GM12878 (cell line): ENCODE measurements at regions of chr3 and their contacts with region 1.

Region 1: GRCh38 chr3:42190701-42191462 is 75.1 kb downstream of the CCK start:
- DNase-seq: no peak
- ATAC-seq: peak; percentile 47
- H3K4me3 ChIP-seq: no peak overlapping the region
- H3K27ac ChIP-seq: peak overlapping the region; percentile 81; the same call in 1 of the 2 replicates
- H3K4me1 ChIP-seq: peaks cover 50% of the 10 kb centered on the region
- H3K27me3 ChIP-seq: no peaks in the 10 kb centered on the region
- CTCF ChIP-seq: peak; percentile 75 to 91 (median 79)
- EP300 ChIP-seq: no peak
- POLR2A ChIP-seq: peak; percentile 21; the same call in 1 of the 2 replicates
- RAD21 ChIP-seq: peak; percentile 79

Region 2: DNA sequence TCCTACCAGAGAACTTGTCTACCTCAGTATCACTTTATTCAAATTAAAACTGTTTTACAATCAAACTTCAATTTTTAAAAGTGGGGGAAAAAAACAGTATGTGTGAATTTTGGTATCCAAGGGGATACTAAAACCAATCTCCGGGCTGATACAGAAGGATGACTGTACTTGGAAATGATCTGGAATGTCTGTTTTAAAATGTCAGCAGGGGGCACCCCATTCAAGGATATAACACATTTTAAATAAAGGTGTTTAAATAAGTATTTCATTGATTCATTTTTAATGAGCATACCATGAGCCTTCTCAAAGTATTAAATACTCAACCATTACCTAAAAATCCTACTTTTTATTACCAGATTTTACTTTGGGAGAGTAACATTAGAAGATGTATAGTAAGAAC is 296.9 kb before region 1 on chr3:
- CTCF ChIA-PET with region 1: interaction called, 19 read pairs
- POLR2A ChIA-PET with region 1: no interaction called
- RAD21 ChIA-PET with region 1: interaction called, 5 read pairs
- SMC1A ChIA-PET with region 1: interaction called, 13 read pairs
- in situ Hi-C with region 1: no loop called
- intact Hi-C with region 1: loop called (anchors 10 kb)
- DNase-seq: no peak
- ATAC-seq: no peak
- H3K4me3 ChIP-seq: no peak overlapping the region
- H3K27ac ChIP-seq: no peak overlapping the region
- H3K4me1 ChIP-seq: no peaks in the 10 kb centered on the region
- H3K27me3 ChIP-seq: no peaks in the 10 kb centered on the region
- CTCF ChIP-seq: peak; percentile 18 to 49 (median 34); a peak in 3 of 6 replicates
- EP300 ChIP-seq: no peak
- POLR2A ChIP-seq: no peak
- RAD21 ChIP-seq: peak; percentile 70

Region 3: DNA sequence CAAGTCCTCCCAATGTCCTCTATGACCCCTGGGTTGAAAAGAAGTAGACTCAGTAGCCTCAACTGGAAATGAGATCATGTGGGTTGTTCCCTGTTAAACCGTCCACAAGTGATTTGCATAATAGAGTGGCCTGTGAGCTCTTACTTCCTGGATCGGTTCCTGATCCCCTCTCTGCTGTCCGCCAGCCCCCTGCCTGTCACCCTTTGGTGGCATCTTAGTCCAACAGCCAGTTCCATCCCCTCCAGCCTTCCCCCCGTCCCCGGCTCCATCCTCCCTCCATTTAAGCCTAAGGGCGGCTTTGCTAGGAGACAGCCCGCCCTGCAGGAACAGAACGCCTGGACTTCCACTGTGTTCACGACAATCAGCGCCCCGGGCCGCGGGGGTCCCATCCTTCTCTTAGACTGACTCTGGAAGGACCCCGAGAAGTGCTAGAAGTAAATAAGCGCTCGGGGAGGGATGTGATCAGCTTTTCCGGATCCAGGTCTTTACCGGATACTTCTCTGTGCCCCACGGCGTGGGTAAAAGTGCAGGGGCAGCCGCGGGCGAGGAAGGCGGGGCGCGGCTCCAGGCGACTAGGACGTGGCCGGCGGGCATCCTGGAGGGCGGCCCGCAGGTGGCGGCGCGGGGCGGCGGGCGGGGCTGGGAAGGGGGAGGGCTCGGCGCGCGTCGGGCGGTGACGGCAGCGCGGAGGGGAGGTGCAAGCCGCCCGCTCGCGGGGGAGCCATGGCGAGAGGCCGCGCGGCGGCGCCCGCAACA is 177.8 kb before region 1 on chr3:
- CTCF ChIA-PET with region 1: interaction called, 9 read pairs
- POLR2A ChIA-PET with region 1: interaction called, 3 read pairs
- RAD21 ChIA-PET with region 1: interaction called, 5 read pairs
- SMC1A ChIA-PET with region 1: interaction called, 3 read pairs
- in situ Hi-C with region 1: no loop called
- intact Hi-C with region 1: loop called (anchors 5 kb)
- DNase-seq: peak; percentile 86
- ATAC-seq: peak; percentile 83
- H3K4me3 ChIP-seq: peak overlapping the region; percentile 99
- H3K27ac ChIP-seq: peak overlapping the region; percentile 93
- H3K4me1 ChIP-seq: peaks cover 16% of the 10 kb centered on the region
- H3K27me3 ChIP-seq: no peaks in the 10 kb centered on the region
- CTCF ChIP-seq: peak in 2 of 3 experiments; percentile 2 to 15; a peak in 1 of 6 replicates
- EP300 ChIP-seq: peak; percentile 69 to 78; a peak in 2 of 4 replicates
- POLR2A ChIP-seq: peak; percentile 88
- RAD21 ChIP-seq: no peak

Region 4: GRCh38 chr3:42118762-42119361 is 72.0 kb before region 1 on chr3:
- CTCF ChIA-PET with region 1: interaction called, 159 read pairs
- POLR2A ChIA-PET with region 1: interaction called, 5 read pairs
- RAD21 ChIA-PET with region 1: interaction called, 64 read pairs
- SMC1A ChIA-PET with region 1: interaction called, 105 read pairs
- in situ Hi-C with region 1: no loop called
- intact Hi-C with region 1: loop called (anchors 1 kb)
- DNase-seq: peak; percentile 71
- ATAC-seq: peak; percentile 89
- H3K4me3 ChIP-seq: no peak overlapping the region
- H3K27ac ChIP-seq: peak overlapping the region; percentile 71
- H3K4me1 ChIP-seq: peaks cover 48% of the 10 kb centered on the region
- H3K27me3 ChIP-seq: no peaks in the 10 kb centered on the region
- CTCF ChIP-seq: peak; percentile 54 to 93 (median 75); a peak in 5 of 6 replicates
- EP300 ChIP-seq: no peak
- POLR2A ChIP-seq: no peak
- RAD21 ChIP-seq: peak; percentile 86

Region 5: DNA sequence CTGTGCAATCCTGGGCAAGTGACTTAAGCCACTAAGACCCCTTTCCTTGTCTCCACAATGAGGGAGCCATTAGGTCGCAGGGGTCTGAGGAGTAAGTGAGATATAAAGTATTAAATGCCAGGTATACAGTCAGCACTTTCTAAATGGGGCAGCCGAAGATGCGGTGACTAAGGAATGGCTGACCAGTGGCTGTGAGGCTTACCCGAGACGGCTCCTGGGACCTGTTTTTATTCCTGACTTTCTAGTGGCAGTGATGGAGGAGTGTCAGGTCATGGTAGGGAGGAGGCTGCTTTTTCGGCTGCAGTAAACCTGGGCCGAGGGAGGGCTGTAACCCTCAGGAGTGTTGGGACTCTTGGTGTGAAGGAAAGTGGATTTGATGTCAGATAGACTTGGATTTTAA is 47.4 kb before region 1 on chr3:
- CTCF ChIA-PET with region 1: interaction called, 10 read pairs
- POLR2A ChIA-PET with region 1: no interaction called
- RAD21 ChIA-PET with region 1: no interaction called
- SMC1A ChIA-PET with region 1: no interaction called
- in situ Hi-C with region 1: no loop called
- intact Hi-C with region 1: no loop called
- DNase-seq: no peak
- ATAC-seq: no peak
- H3K4me3 ChIP-seq: no peak overlapping the region
- H3K27ac ChIP-seq: no peak overlapping the region
- H3K4me1 ChIP-seq: peaks cover 4% of the 10 kb centered on the region; the same call in 1 of the 2 replicates
- H3K27me3 ChIP-seq: no peaks in the 10 kb centered on the region
- CTCF ChIP-seq: no peak
- EP300 ChIP-seq: no peak
- POLR2A ChIP-seq: no peak
- RAD21 ChIP-seq: no peak

Region 6: DNA sequence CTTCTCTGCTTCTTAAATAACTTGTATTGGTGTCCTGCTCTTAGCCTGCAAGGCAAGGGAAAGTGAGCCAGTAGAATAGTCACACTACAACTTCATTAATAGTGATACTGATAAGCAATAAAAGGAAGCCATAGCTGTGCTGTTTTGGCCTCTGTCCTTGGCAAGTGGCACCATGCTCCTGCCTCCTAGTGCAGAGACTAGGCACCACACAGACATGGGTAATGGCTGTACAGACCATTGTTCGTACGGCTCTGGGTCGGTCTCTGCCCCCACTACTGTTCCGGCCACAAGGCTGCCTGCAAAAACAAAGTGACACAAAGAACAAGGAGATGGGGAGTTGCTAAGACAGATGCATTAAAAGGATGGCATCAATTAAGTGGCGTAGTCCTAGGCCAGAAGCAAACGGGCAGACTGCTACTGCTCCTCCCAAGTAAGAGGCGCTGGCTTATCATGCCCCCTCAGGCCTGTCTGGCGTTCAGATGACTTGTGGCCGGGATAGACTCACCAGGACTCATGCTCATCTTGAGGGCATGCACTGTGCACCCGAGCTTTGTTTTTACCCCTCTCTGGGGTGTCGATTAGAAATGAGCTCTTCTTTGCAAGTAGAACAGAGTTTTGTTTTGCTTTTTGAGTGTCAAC is 24.1 kb before region 1 on chr3:
- CTCF ChIA-PET with region 1: interaction called, 50 read pairs
- POLR2A ChIA-PET with region 1: no interaction called
- RAD21 ChIA-PET with region 1: interaction called, 4 read pairs
- SMC1A ChIA-PET with region 1: interaction called, 5 read pairs
- in situ Hi-C with region 1: no loop called
- intact Hi-C with region 1: no loop called
- DNase-seq: no peak
- ATAC-seq: no peak
- H3K4me3 ChIP-seq: no peak overlapping the region
- H3K27ac ChIP-seq: no peak overlapping the region
- H3K4me1 ChIP-seq: peaks cover 20% of the 10 kb centered on the region
- H3K27me3 ChIP-seq: no peaks in the 10 kb centered on the region
- CTCF ChIP-seq: no peak
- EP300 ChIP-seq: no peak
- POLR2A ChIP-seq: no peak
- RAD21 ChIP-seq: no peak

Region 7: DNA sequence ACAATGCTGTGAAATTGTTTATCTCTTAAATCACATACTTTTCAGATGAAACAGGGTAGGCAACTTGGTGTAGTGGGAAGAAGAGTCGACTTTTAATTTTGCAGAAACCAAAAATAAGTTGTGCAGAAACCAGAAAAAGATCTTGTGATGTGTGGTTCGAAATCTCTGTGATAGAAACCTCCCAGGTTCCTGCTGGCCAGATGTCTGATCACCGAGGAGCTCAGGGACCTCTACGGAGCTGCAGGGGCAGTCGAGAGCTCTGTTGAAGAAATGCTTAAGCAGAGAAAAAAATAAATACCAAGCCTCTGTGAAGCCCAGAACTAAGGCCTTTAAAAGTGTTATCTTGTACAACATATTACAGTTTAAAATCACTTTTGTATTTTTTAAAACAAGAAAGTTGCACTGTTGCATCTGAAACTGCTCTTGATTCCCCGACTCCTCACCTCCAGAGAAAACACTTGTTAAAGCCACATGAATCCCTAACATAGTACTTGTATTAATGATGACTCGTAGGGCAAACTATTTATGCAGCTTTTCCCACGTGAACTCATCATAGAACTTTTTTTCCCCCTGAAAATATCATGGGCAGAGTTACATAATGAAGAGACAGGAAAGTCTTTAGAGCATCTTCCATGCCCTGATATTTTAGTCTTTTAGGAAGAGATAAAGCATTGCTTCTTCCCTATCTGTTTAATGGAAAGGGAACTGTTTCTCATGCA is 23.8 kb after region 1 on chr3:
- CTCF ChIA-PET with region 1: interaction called, 13 read pairs
- POLR2A ChIA-PET with region 1: interaction called, 4 read pairs
- RAD21 ChIA-PET with region 1: interaction called, 8 read pairs
- SMC1A ChIA-PET with region 1: interaction called, 8 read pairs
- in situ Hi-C with region 1: no loop called
- intact Hi-C with region 1: no loop called
- DNase-seq: no peak
- ATAC-seq: peak; percentile 71
- H3K4me3 ChIP-seq: peak overlapping the region; percentile 30; the same call in 1 of the 2 replicates
- H3K27ac ChIP-seq: peak overlapping the region; percentile 84
- H3K4me1 ChIP-seq: peaks cover 48% of the 10 kb centered on the region
- H3K27me3 ChIP-seq: no peaks in the 10 kb centered on the region
- CTCF ChIP-seq: peak in 2 of 3 experiments; percentile 13 to 35; a peak in 2 of 6 replicates
- EP300 ChIP-seq: no peak
- POLR2A ChIP-seq: no peak
- RAD21 ChIP-seq: no peak